ENCODE measurements at regions of chr2 and their contacts with region 1.

Region 1: DNA sequence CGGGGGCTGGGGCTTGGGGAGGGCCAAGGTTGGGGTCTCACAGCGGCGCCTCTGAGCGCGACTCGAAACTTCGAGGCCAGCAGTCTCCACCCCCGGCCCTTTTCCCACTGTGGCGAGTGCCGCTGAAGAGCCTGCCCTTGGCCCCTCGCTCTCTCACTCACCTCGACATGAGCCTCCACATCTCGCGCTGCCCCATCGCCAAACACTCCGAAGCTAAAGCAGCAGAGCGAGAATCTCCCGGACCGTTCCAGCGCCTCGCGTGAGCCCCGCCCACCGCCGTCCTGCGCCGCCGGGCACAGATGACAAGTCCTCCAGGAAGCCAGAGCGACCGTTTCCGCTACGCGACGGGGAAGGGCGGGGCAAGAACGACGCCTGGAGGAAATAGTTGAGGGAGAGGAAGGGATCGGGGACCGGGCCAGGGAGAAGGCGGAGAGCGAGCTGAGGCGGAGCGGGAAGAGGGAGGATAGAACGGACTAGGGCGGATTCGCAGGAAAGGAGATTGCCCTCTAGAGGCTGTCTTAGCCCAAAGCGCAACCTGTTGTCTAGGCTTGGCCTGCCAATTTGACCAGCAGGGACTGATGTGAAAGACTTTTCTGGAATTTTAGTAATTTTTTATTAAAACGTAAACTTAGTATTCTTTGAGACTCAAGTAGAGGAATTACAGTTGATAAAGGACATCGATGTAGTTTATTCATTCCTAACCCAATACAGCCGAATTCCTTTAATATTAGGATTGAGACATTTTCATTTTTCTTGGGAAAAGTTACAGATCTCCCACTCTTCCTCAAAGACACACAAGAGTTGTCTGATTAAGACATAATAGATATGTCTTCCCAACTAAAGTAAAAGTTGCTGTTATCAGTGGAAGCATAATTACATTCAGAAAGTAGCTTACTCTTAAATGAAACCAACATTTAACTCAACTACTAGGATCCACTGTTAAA is at the start of gene HIBCH:
- DNase-seq: peak; percentile 99
- ATAC-seq: peak; percentile 95
- H3K4me3 ChIP-seq: peak within 1 kb of the TSS; percentile 95
- H3K27ac ChIP-seq: no peak within 1 kb of the TSS
- H3K4me1 ChIP-seq: peaks cover 26% of the 10 kb centered on the region
- H3K27me3 ChIP-seq: no peaks in the 10 kb centered on the region
- CTCF ChIP-seq: peak; percentile 86
- total RNA-seq, gene HIBCH: 8.1 and 12.0 TPM in 2 replicates

Region 2: GRCh38 chr2:189762551-189763298 is 557.1 kb before region 1 on chr2 and contains the start of gene OSGEPL1:
- CTCF ChIA-PET with region 1: no interaction called
- POLR2A ChIA-PET with region 1: no interaction called
- intact Hi-C with region 1: loop called (anchors 10 kb)
- DNase-seq: peak; percentile 91
- ATAC-seq: peak; percentile 94
- H3K4me3 ChIP-seq: peak within 1 kb of the TSS; percentile 95
- H3K27ac ChIP-seq: peak within 1 kb of the TSS; percentile 74
- H3K4me1 ChIP-seq: peaks cover 15% of the 10 kb centered on the region
- H3K27me3 ChIP-seq: no peaks in the 10 kb centered on the region
- CTCF ChIP-seq: peak; percentile 79
- total RNA-seq, gene OSGEPL1: 8.1 and 12.6 TPM in 2 replicates

Region 3: DNA sequence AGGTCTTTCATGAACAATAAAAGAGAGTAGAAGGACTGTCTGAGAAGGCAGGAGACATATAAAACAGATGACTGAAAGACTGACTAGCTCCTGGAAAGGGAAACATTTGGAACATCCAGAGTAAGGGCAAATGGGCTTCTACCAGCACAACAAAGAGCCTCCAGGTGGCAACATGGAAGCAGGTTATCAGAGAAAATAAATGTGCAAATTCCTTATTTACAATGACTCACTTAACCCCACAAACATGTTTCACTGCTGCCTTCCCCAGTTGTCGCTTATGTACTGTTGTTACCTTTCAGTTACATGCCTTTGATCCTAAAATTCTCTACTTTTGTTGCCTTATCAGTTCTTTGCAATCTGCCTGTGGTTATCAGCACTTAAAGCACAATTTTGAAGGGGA is 117.2 kb before region 1 on chr2:
- CTCF ChIA-PET with region 1: interaction called, 3 read pairs
- POLR2A ChIA-PET with region 1: no interaction called
- intact Hi-C with region 1: loop called (anchors 5 kb)
- DNase-seq: peak; percentile 53
- ATAC-seq: peak; percentile 81
- H3K4me3 ChIP-seq: no peak overlapping the region
- H3K27ac ChIP-seq: no peak overlapping the region
- H3K4me1 ChIP-seq: peaks cover 6% of the 10 kb centered on the region; the same call in 1 of the 2 replicates
- H3K27me3 ChIP-seq: no peaks in the 10 kb centered on the region
- CTCF ChIP-seq: peak; percentile 52; the same call in 1 of the 2 replicates

Region 4: DNA sequence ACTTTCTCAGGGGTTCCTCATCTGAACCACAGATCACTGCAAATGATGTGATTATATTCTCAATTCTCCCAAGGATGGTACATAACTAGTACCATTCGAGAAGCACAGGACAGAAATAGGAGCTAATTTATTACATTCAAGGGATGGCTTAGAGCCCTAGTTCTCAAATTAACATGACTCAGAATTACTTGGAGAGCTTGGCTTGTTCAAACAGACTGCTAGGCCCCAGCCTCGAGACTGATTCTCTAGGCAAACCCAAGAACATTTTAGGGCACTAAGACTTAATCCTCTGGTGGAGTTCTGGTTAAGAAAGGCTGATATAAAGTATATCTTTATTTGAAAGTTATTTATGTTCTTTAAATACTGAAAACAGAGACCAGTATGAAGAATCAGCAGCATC is 36.0 kb before region 1 on chr2:
- CTCF ChIA-PET with region 1: no interaction called
- POLR2A ChIA-PET with region 1: no interaction called
- intact Hi-C with region 1: loop called (anchors 5 kb)
- DNase-seq: peak; percentile 57
- ATAC-seq: peak; percentile 99
- H3K4me3 ChIP-seq: no peak overlapping the region
- H3K27ac ChIP-seq: no peak overlapping the region
- H3K4me1 ChIP-seq: peaks cover 4% of the 10 kb centered on the region; the same call in 1 of the 2 replicates
- H3K27me3 ChIP-seq: no peaks in the 10 kb centered on the region
- CTCF ChIP-seq: no peak

Region 5: DNA sequence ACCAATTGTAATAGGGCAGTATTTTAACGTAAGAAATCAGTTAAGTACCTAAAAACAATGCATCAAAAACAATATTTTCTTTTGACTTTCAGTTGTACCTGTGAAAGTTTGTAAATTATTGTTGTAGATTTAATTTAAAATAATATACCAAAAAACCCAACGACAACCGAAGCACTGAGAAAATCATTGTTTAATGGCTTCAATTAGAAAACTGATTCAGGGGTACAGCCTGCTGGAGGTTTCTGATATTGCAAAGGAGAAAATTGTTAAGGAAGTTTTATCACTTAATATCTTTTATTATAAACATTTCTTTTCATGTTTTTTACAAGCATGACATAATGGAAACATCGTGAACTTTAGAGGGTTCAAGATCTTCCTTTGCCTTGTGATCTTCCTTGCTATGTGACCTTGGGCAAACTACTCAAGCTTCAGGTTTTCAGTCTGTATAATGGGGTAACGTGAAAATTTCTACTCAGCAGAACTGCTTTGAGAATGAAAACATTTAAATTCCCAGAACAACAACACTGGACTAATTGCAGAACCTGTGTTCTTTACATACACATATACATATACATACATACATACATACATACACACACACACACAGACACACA is 484.5 kb after region 1 on chr2:
- CTCF ChIA-PET with region 1: interaction called, 3 read pairs
- POLR2A ChIA-PET with region 1: interaction called, 10 read pairs
- intact Hi-C with region 1: loop called (anchors 10 kb)
- DNase-seq: peak; percentile 69
- ATAC-seq: no peak
- H3K4me3 ChIP-seq: no peak overlapping the region
- H3K27ac ChIP-seq: no peak overlapping the region
- H3K4me1 ChIP-seq: peaks cover 4% of the 10 kb centered on the region
- H3K27me3 ChIP-seq: no peaks in the 10 kb centered on the region
- CTCF ChIP-seq: peak; percentile 79

Region 6: GRCh38 chr2:191030521-191031154 is 710.8 kb after region 1 on chr2:
- CTCF ChIA-PET with region 1: no interaction called
- POLR2A ChIA-PET with region 1: no interaction called
- intact Hi-C with region 1: no loop called
- DNase-seq: peak; percentile 64
- ATAC-seq: peak; percentile 85
- H3K4me3 ChIP-seq: no peak overlapping the region
- H3K27ac ChIP-seq: no peak overlapping the region
- H3K4me1 ChIP-seq: no peaks in the 10 kb centered on the region
- H3K27me3 ChIP-seq: no peaks in the 10 kb centered on the region
- CTCF ChIP-seq: peak; percentile 78